Activated naive CD4-positive, alpha-beta T cell treated with anti-CD3 and anti-CD28 coated beads for 36 hours (primary cell): ENCODE measurements at regions of chr1 and their contacts with region 1.

Region 1: DNA sequence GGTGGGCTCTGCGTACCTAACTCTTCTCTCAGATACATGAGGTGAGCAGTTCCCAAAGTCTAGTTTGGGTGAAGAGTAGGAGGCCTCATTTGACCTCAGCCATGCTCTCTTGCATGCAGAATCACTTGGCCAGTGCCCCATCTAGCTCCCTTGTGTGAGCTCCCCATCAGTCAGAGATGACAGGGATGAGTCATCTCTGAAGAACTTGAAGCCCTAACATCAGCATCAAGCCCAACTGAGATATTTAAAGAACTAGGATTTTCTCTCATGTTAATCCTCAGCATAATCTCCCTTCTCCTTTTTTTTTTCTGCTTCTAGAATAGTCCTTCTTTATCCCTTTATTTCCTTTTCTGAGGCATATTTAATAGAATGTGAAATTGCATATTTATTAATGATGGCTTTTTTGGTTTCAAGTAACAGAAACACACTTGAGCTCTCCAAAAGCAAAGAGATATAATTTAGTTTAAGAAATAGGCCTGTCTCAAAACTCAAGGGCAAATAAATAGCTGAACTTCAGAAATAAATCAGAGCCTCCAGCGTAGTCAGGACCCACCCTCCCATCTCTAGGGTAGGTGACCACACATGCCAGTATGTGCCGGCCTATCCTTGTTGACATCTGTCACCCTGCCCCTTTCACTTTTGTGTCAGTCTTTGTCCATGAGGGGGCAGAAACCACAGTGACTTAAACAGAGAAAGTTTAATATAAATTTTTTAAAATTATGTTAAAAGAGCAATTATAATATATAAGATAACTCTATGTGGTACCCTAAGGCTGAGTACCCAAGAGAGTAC is 112.3 kb downstream of the TSEN15 start:
- DNase-seq: no peak
- H3K4me3 Mint-ChIP-seq: no peak overlapping the region
- H3K27ac Mint-ChIP-seq: no peak overlapping the region
- H3K4me1 Mint-ChIP-seq: no peaks in the 10 kb centered on the region
- H3K27me3 Mint-ChIP-seq: peaks cover 1% of the 10 kb centered on the region

Region 2: GRCh38 chr1:183956559-183957188 is 207.2 kb before region 1 on chr1:
- CTCF ChIA-PET with region 1: no interaction called
- intact Hi-C with region 1: loop called (anchors 1 kb)
- DNase-seq: peak; percentile 71
- H3K4me3 Mint-ChIP-seq: no peak overlapping the region
- H3K27ac Mint-ChIP-seq: peak overlapping the region; percentile 86
- H3K4me1 Mint-ChIP-seq: no peaks in the 10 kb centered on the region
- H3K27me3 Mint-ChIP-seq: no peaks in the 10 kb centered on the region

Region 3: GRCh38 chr1:184051485-184052193 is 112.2 kb before region 1 on chr1 and contains the start of gene TSEN15:
- CTCF ChIA-PET with region 1: no interaction called
- intact Hi-C with region 1: loop called (anchors 1 kb)
- DNase-seq: peak; percentile 84
- H3K4me3 Mint-ChIP-seq: peak within 1 kb of the TSS; percentile 96
- H3K27ac Mint-ChIP-seq: peak within 1 kb of the TSS; percentile 96
- H3K4me1 Mint-ChIP-seq: peaks cover 34% of the 10 kb centered on the region
- H3K27me3 Mint-ChIP-seq: peaks cover 5% of the 10 kb centered on the region
- total RNA-seq, gene TSEN15: 52.6 to 57.6 TPM

Region 4: DNA sequence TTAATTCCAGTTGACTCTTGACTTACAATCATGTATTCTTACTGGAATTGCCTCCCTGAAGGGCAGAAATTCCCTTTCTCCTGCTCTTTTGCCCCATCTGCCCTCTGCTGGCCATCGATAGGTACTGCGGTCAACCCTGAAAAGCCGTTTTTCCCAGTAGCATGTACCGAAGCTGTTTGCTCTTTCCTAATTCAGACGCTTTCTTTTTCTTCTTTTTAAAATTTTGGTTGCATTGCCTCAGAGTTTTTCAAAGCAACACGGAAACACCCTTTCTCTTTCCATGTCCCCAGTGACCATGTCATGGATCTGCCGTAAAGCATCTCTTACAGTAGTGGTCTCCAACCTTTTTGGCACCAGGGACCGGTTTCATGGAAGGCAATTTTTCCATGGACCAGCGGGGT is 58.8 kb after region 1 on chr1:
- CTCF ChIA-PET with region 1: no interaction called
- intact Hi-C with region 1: loop called (anchors 2 kb)
- DNase-seq: peak; percentile 59
- H3K4me3 Mint-ChIP-seq: no peak overlapping the region
- H3K27ac Mint-ChIP-seq: no peak overlapping the region
- H3K4me1 Mint-ChIP-seq: no peaks in the 10 kb centered on the region
- H3K27me3 Mint-ChIP-seq: peaks cover 2% of the 10 kb centered on the region

Region 5: GRCh38 chr1:184494929-184495328 is 331.1 kb after region 1 on chr1:
- CTCF ChIA-PET with region 1: no interaction called
- intact Hi-C with region 1: loop called (anchors 5 kb)
- DNase-seq: no peak
- H3K4me3 Mint-ChIP-seq: no peak overlapping the region
- H3K27ac Mint-ChIP-seq: no peak overlapping the region
- H3K4me1 Mint-ChIP-seq: peaks cover 14% of the 10 kb centered on the region
- H3K27me3 Mint-ChIP-seq: no peaks in the 10 kb centered on the region

Region 6: GRCh38 chr1:184866991-184867788 is 703.3 kb after region 1 on chr1:
- CTCF ChIA-PET with region 1: no interaction called
- intact Hi-C with region 1: loop called (anchors 2 kb)
- DNase-seq: peak; percentile 80
- H3K4me3 Mint-ChIP-seq: peak overlapping the region; percentile 14
- H3K27ac Mint-ChIP-seq: peak overlapping the region; percentile 94
- H3K4me1 Mint-ChIP-seq: peaks cover 32% of the 10 kb centered on the region
- H3K27me3 Mint-ChIP-seq: peaks cover 10% of the 10 kb centered on the region

Region 7: GRCh38 chr1:185166106-185166505 is 1002.2 kb after region 1 on chr1:
- CTCF ChIA-PET with region 1: no interaction called
- intact Hi-C with region 1: no loop called
- DNase-seq: no peak
- H3K4me3 Mint-ChIP-seq: no peak overlapping the region
- H3K27ac Mint-ChIP-seq: no peak overlapping the region
- H3K4me1 Mint-ChIP-seq: peaks cover 3% of the 10 kb centered on the region
- H3K27me3 Mint-ChIP-seq: no peaks in the 10 kb centered on the region